Naive thymus-derived CD4-positive, alpha-beta T cell (primary cell): ENCODE measurements at regions of chr15 and their contacts with region 1.

Region 1: GRCh38 chr15:23497710-23498111 is 50.7 kb upstream of the GOLGA6L2 start:
- DNase-seq: peak in 1 of 9 donors; percentile 1
- ATAC-seq: no peak
- H3K4me3 ChIP-seq: no peak overlapping the region
- H3K4me3 Mint-ChIP-seq: no peak overlapping the region
- H3K27ac ChIP-seq: no peak overlapping the region
- H3K27ac Mint-ChIP-seq: no peak overlapping the region
- H3K4me1 ChIP-seq: no peaks in the 10 kb centered on the region
- H3K4me1 Mint-ChIP-seq: no peaks in the 10 kb centered on the region
- H3K27me3 ChIP-seq: no peaks in the 10 kb centered on the region
- H3K27me3 Mint-ChIP-seq: peaks cover 0 to 5% (median 0%) of the 10 kb centered on the region in 5 donors

Region 2: DNA sequence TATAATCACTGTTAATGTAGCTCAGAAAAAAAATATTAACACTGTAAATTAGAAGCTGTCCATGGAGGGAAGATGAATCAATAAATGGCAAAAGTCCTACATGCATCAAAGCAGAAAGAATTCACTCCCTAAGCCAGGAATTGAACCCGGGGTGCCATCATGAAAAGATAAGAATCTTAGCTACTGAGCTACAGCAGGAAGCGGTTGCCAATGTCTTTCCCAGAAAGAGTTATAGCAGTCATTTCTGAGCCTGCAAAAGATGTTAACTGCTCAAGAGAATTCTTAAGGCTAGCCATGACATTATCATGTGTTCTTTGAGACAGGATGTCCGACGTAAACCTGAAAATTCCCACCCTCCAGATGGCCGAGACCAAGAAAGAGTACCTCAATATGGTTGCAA is 20.4 kb after region 1 on chr15:
- CTCF ChIA-PET with region 1: no interaction called
- POLR2A ChIA-PET with region 1: no interaction called
- intact Hi-C with region 1: no loop called
- DNase-seq: no peak
- ATAC-seq: no peak
- H3K4me3 ChIP-seq: no peak overlapping the region
- H3K4me3 Mint-ChIP-seq: no peak overlapping the region
- H3K27ac ChIP-seq: no peak overlapping the region
- H3K27ac Mint-ChIP-seq: no peak overlapping the region
- H3K4me1 ChIP-seq: no peaks in the 10 kb centered on the region
- H3K4me1 Mint-ChIP-seq: peaks cover 0 to 2% (median 0%) of the 10 kb centered on the region in 7 donors
- H3K27me3 ChIP-seq: no peaks in the 10 kb centered on the region
- H3K27me3 Mint-ChIP-seq: peaks cover 0 to 13% (median 0%) of the 10 kb centered on the region in 5 donors

Region 3: GRCh38 chr15:23565395-23566070 is 67.8 kb after region 1 on chr15 and contains the start of gene MKRN3:
- CTCF ChIA-PET with region 1: no interaction called
- POLR2A ChIA-PET with region 1: interaction called, 3 read pairs
- intact Hi-C with region 1: loop called in 1 of 2 experiments (anchors 2 kb)
- DNase-seq: peak in 8 of 9 donors; percentile 14 to 68 (median 47)
- ATAC-seq: no peak
- H3K4me3 ChIP-seq: peak within 1 kb of the TSS; percentile 39
- H3K4me3 Mint-ChIP-seq: peak within 1 kb of the TSS; percentile 42 to 86 (median 72)
- H3K27ac ChIP-seq: peak within 1 kb of the TSS; percentile 70
- H3K27ac Mint-ChIP-seq: peak within 1 kb of the TSS in 8 of 9 donors; percentile 75 to 93 (median 82)
- H3K4me1 ChIP-seq: no peaks in the 10 kb centered on the region
- H3K4me1 Mint-ChIP-seq: peaks cover 0 to 13% (median 0%) of the 10 kb centered on the region in 7 donors
- H3K27me3 ChIP-seq: no peaks in the 10 kb centered on the region
- H3K27me3 Mint-ChIP-seq: peaks cover 0 to 13% (median 6%) of the 10 kb centered on the region in 5 donors
- total RNA-seq, gene MKRN3: 0.37 to 11.5 (median 1.8) TPM